ENCODE measurements at regions of chr1 and their contacts with region 1.

Region 1: DNA sequence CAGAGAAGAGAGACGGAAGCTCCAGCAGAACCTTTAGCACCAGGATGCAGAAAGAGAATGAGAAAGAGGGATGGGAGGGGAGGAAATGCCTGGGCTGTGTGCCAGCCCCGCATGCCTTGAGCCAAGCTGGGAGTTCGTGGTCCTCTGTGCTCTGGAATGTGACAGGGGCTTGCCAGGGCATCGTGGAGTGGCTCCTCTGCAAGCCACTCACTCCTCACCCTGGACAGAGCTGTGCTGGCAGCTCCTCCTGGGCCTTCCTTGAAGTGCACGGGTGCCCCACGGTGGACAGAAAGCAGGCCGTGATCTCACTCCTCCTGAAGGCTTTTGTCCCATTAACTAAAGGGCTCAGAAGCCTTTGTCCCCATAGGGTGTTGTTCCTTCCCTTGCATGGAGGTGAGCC is 34.8 kb upstream of the PRELP start:
- DNase-seq: no peak
- H3K4me3 ChIP-seq: no peak overlapping the region
- H3K27ac ChIP-seq: peak overlapping the region in 3 of 4 donors; percentile 11 to 59 (median 52)
- H3K4me1 ChIP-seq: peaks cover 14 to 26% (median 25%) of the 10 kb centered on the region in 4 donors
- H3K27me3 ChIP-seq: no peaks in the 10 kb centered on the region
- CTCF ChIP-seq: peak; percentile 71 to 83 (median 78)
- EP300 ChIP-seq: no peak
- POLR2A ChIP-seq: no peak

Region 2: DNA sequence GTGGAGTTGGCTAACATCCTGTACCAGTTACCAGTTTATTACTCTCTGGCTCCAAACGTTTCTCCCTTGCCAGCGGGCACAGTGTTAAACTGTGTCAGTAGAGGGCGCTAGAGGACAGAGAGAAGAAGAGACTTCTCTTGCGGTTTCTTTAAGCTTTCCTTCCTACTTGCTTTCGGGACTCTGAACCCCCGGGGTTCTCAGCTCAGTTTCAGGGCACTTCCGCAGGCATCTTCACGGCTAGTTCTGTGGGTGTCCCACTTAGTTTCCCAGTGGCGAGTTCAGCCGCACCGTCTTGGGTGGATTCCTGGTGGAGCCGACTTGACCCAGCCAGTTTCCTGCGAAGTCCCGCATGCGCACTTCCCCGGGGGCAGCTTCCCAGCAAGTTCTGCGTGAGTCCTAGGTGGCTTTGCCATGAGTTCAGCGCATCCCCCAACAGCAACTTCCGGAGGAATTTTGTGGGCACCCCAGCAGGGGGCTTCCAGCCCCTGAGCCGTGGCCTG is 173.4 kb before region 1 on chr1:
- intact Hi-C with region 1: loop called (anchors 5 kb)
- DNase-seq: peak; percentile 97
- H3K4me3 ChIP-seq: peak overlapping the region; percentile 60 to 67 (median 62)
- H3K27ac ChIP-seq: peak overlapping the region; percentile 81 to 86 (median 84)
- H3K4me1 ChIP-seq: peaks cover 3 to 29% (median 16%) of the 10 kb centered on the region in 4 donors
- H3K27me3 ChIP-seq: no peaks in the 10 kb centered on the region
- CTCF ChIP-seq: peak; percentile 93 to 97 (median 96)
- EP300 ChIP-seq: no peak
- POLR2A ChIP-seq: no peak

Region 3: DNA sequence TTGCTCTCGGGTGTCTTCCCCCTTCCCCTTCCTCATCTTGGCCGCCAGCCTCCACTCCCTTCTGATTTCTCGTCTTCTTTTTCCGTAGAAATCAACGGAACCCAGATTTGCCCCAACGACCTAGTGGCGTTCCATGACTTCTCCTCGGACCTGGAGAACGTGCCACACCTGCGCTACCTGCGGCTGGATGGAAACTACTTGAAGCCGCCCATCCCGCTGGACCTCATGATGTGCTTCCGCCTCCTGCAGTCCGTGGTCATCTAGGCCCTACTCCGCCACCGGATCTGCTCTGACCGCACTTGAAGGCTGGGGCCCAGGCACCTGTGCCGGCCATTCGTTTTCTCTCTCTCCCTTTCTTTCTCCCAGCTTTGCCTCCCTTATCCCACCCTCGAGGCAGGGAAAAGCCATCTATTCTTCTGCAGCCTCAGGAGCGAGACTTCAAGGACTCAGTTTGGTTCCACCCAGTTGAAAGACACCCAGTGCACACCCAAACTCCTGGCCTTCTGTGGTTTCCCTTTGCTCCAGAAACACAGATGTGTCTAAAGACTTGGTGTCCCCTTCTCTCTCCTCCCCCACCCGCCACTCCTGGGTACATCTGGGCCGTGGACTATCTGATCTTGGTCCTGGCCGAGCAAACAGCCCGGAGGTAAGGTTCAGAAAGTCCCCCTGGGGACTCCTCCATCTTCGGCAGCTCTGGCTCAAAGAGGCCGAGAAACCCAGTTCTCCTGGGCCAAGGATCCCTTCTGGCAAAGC is 46.0 kb after region 1 on chr1:
- intact Hi-C with region 1: loop called (anchors 5 kb)
- DNase-seq: no peak
- H3K4me3 ChIP-seq: peak overlapping the region; percentile 31 to 52 (median 33)
- H3K27ac ChIP-seq: peak overlapping the region; percentile 78 to 94 (median 86)
- H3K4me1 ChIP-seq: peaks cover 23 to 75% (median 72%) of the 10 kb centered on the region in 4 donors
- H3K27me3 ChIP-seq: no peaks in the 10 kb centered on the region
- CTCF ChIP-seq: no peak
- EP300 ChIP-seq: no peak
- POLR2A ChIP-seq: no peak